A549 (cell line): ENCODE measurements at regions of chr12 and their contacts with region 1.

Region 1: GRCh38 chr12:120194534-120195395 is at the start of gene GCN1:
- DNase-seq: peak; percentile 76 to 84
- ATAC-seq: peak; percentile 84 to 87
- H3K4me3 ChIP-seq: peak within 1 kb of the TSS; percentile 68
- H3K27ac ChIP-seq: peak within 1 kb of the TSS; percentile 95 to 97
- H3K4me1 ChIP-seq: peaks cover 54% of the 10 kb centered on the region
- CTCF ChIP-seq: no peak
- EP300 ChIP-seq: no peak
- POLR2A ChIP-seq: peak; percentile 96
- RAD21 ChIP-seq: no peak
- polyA plus RNA-seq, gene GCN1: 64.1 and 81.5 TPM in 2 replicates

Region 2: DNA sequence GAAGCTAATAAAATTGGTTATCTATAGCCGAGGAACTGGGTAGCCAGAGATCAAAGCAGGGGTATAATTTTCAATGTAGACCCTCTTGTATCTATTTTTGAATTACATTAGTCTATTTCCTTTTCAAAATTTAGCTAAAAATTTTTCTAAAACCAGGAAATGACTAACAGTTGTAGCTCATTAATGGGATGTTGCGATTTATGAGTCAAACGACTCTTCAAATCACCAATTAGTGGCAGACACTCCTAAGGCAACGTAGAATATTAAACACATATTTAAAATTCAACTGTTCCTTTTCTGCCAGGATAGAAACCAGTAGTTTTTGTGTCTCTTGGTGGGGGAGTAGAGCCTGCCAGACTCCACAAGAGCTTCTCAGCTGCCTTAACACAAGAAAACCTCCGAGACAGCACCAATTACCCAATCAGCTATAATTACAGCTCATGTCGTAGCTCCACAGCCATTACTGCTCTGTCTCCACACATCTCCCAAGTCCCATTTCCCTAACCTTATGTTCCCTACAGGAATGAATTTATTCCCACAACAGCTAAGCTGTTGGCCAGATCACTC is 27.2 kb before region 1 on chr12:
- CTCF ChIA-PET with region 1: no interaction called
- POLR2A ChIA-PET with region 1: interaction called, 20 read pairs
- DNase-seq: no peak
- ATAC-seq: no peak
- H3K4me3 ChIP-seq: no peak overlapping the region
- H3K27ac ChIP-seq: no peak overlapping the region
- H3K4me1 ChIP-seq: no peaks in the 10 kb centered on the region
- CTCF ChIP-seq: no peak
- EP300 ChIP-seq: no peak
- POLR2A ChIP-seq: no peak
- RAD21 ChIP-seq: no peak

Region 3: DNA sequence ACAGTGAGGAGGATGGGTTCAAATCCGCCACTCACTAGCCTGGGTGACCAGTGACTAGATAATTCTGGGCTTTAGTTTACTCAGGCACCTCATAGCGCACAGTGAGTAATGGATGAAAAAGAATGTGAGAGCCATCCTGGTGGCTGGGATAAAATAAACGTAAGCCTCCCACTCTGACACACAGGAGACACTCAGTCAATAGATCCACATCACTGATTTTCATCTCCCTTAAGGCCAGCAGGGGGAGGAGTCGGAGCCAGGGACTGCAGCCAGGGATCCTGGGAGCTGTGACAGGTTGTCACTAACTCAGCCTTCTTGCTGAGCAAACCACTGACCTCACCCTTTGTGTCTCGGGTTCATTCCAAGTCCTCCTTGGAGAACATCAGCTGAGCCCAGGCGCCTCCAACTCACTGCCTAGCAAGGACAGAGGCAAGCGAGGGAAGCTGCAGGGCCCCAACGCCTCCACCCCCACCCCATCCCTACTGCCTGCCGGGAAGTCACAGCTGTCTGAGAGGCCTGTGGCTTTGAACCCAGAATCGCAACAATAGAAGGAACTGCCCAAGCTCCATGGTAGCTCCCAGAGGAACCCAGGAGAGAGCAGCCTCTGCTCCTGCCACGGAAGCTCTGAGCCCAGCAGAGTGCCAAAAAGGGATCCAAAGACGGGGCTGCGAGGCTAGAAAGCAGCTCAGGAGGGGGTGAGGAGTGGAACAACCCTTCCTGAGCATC is 40.0 kb after region 1 on chr12:
- CTCF ChIA-PET with region 1: interaction called, 308 read pairs
- POLR2A ChIA-PET with region 1: interaction called, 132 read pairs
- DNase-seq: peak; percentile 94 to 96
- ATAC-seq: peak; percentile 58 to 64
- H3K4me3 ChIP-seq: 0 out of 3 replicates have a peak overlapping the region, but pooled peaks have one; percentile 0
- H3K27ac ChIP-seq: peak overlapping the region; percentile 93 to 100
- H3K4me1 ChIP-seq: peaks cover 98% of the 10 kb centered on the region
- CTCF ChIP-seq: peak; percentile 39; the same call in 2 of the 3 replicates
- EP300 ChIP-seq: 0 out of 5 replicates have a peak, but pooled peaks of 1 of the 2 experiments have one; percentile 16
- POLR2A ChIP-seq: no peak
- RAD21 ChIP-seq: peak; percentile 54 to 56; a peak in 4 of 5 replicates

Region 4: DNA sequence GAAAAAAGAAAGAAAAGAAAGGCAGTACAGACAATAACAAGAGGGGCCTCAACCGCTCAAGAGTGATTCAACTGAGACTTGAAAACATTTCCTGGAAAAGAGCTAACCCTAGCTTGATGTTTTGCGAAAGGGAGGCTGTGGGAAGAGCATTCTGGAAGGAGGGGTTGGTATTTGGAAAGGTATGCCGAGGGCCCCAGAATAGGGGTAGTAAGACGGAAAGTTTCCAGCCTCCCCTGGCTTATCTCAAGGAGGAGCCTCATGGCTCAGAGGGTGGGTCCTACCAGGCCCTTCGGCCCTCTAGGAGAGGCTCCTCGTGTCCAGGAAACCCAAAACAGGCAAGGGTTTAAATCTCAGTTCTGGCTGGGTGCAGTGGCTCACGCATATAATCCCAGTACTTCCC is 88.6 kb after region 1 on chr12:
- CTCF ChIA-PET with region 1: no interaction called
- POLR2A ChIA-PET with region 1: no interaction called
- DNase-seq: no peak
- ATAC-seq: no peak; a peak in 2 of 6 replicates
- H3K4me3 ChIP-seq: no peak overlapping the region
- H3K27ac ChIP-seq: no peak overlapping the region
- H3K4me1 ChIP-seq: peaks cover 4% of the 10 kb centered on the region; the same call in 2 of the 3 replicates
- CTCF ChIP-seq: no peak
- EP300 ChIP-seq: no peak
- POLR2A ChIP-seq: no peak
- RAD21 ChIP-seq: no peak